ENCODE measurements at regions of chr17 and their contacts with region 1.

Region 1: GRCh38 chr17:55783684-55784245 is 32.9 kb downstream of the PCTP start:
- DNase-seq: no peak
- CTCF ChIP-seq: no peak

Region 2: DNA sequence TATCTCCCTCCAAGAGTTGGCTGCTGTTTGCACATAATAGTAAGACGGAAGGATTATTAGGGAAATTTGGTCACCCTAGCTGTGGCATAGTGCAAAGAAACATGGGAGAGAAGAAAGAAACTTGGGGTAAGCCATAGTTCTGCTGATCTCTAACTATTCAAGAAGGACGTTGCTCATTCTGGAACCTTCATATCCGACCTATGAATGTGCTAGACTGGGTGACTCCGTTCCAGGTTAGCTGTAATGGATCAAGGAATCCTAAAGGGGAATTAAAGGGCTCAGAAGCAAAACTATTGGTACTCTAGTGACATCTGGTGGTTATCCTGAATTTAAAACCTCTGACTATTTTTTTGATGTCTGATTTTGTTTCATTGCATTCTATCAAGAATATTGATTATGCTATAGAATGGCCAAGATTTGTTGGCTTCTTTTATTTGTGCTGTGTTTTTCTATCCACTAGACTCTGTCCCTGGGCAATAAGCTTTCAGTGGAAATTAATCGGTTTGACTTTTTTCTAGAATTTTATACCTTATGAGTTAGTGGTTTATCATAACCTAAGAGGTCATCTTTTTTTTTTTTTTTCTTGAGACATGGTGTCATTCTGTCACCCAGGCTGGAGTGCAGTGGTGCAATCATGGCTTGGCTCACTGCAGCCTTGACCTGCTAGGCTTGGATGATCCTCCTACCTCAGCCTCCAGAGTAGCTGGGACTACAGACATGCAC is 13.5 kb before region 1 on chr17:
- CTCF ChIA-PET with region 1: interaction called, 38 read pairs
- POLR2A ChIA-PET with region 1: no interaction called
- DNase-seq: peak; percentile 45
- CTCF ChIP-seq: peak; percentile 26

Measured in GM10248 (cell line).